SK-N-SH (cell line): ENCODE measurements at regions of chr15 and their contacts with region 1.

Region 1: GRCh38 chr15:101008158-101009139 is 89.3 kb downstream of the LRRK1 start:
- DNase-seq: peak; percentile 89
- H3K4me3 ChIP-seq: peak overlapping the region; percentile 43 to 59
- H3K27ac ChIP-seq: no peak overlapping the region; a peak in 1 of 4 replicates
- H3K4me1 ChIP-seq: peaks cover 0 to 4% of the 10 kb centered on the region in 2 experiments; a peak in 1 of 4 replicates
- H3K27me3 ChIP-seq: no peaks in the 10 kb centered on the region
- CTCF ChIP-seq: peak; percentile 92
- EP300 ChIP-seq: no peak
- RAD21 ChIP-seq: peak; percentile 60

Region 2: GRCh38 chr15:100602064-100602822 is 406.2 kb before region 1 on chr15 and contains the starts of genes ASB7 and LINS1:
- CTCF ChIA-PET with region 1: interaction called, 22 read pairs
- POLR2A ChIA-PET with region 1: no interaction called
- DNase-seq: peak; percentile 94
- H3K4me3 ChIP-seq: peak within 1 kb of the TSS; percentile 89 to 99
- H3K27ac ChIP-seq: peak within 1 kb of the TSS; percentile 63 to 87
- H3K4me1 ChIP-seq: peaks cover 5 to 18% of the 10 kb centered on the region in 2 experiments; a peak in 3 of 4 replicates
- H3K27me3 ChIP-seq: no peaks in the 10 kb centered on the region
- CTCF ChIP-seq: no peak
- EP300 ChIP-seq: peak in 1 of 2 experiments; percentile 4; a peak in 1 of 4 replicates
- RAD21 ChIP-seq: no peak
- polyA plus RNA-seq, gene ASB7: 6.1 and 7.7 TPM in 2 replicates
- polyA plus RNA-seq, gene LINS1: 5.0 and 6.9 TPM in 2 replicates

Region 3: GRCh38 chr15:100642213-100642949 is 366.1 kb before region 1 on chr15:
- CTCF ChIA-PET with region 1: interaction called, 102 read pairs
- POLR2A ChIA-PET with region 1: no interaction called
- DNase-seq: no peak
- H3K4me3 ChIP-seq: no peak overlapping the region
- H3K27ac ChIP-seq: no peak overlapping the region
- H3K4me1 ChIP-seq: peaks cover 0 to 2% of the 10 kb centered on the region in 2 experiments; a peak in 1 of 4 replicates
- H3K27me3 ChIP-seq: no peaks in the 10 kb centered on the region
- CTCF ChIP-seq: no peak
- EP300 ChIP-seq: no peak
- RAD21 ChIP-seq: no peak

Region 4: DNA sequence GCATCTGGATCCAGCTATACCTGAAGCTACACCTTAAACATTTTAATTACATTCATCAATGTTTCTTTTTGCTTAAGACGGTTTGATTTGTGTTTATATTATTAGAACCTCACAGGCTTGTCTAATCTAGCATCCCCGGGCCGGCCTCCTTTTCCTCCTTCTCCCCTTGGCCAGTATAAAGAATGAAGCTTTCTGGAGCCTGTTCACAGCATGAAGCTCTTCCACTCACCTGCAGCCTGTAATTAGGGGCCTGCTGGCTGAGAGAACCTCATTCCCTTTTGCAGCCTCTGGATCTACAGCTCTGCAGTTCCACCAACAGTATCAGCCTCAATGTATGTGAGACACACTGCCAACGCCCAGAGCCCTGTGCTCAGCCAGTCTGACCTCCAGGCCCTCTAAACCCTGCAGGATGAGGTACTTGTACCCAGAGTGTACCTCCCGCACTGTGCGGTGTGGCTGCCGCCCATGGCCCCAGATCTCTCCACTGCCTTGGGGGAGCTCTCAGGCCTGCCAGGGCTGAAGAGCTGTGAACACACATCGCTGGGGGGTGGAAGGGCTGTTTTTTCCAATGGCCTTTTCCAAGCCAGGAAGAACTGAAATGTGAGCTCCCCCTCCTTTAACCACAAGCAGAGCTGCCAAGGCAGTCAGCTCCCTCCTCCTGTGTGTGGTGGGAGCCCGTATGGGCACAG is 243.5 kb before region 1 on chr15:
- CTCF ChIA-PET with region 1: interaction called, 22 read pairs
- POLR2A ChIA-PET with region 1: interaction called, 3 read pairs
- DNase-seq: peak; percentile 45
- H3K4me3 ChIP-seq: no peak overlapping the region
- H3K27ac ChIP-seq: peak overlapping the region; percentile 44 to 94; a peak in 3 of 4 replicates
- H3K4me1 ChIP-seq: peaks cover 8 to 80% of the 10 kb centered on the region in 2 experiments; a peak in 3 of 4 replicates
- H3K27me3 ChIP-seq: no peaks in the 10 kb centered on the region
- CTCF ChIP-seq: no peak
- EP300 ChIP-seq: peak in 1 of 2 experiments; percentile 68; a peak in 1 of 4 replicates
- RAD21 ChIP-seq: no peak

Region 5: GRCh38 chr15:100918034-100918689 is 90.3 kb before region 1 on chr15:
- CTCF ChIA-PET with region 1: interaction called, 156 read pairs
- POLR2A ChIA-PET with region 1: interaction called, 5 read pairs
- DNase-seq: peak; percentile 93
- H3K4me3 ChIP-seq: peak overlapping the region; percentile 67 to 73
- H3K27ac ChIP-seq: peak overlapping the region in 1 of 2 experiments; percentile 16; a peak in 1 of 4 replicates
- H3K4me1 ChIP-seq: peaks cover 0 to 29% of the 10 kb centered on the region in 2 experiments; a peak in 1 of 4 replicates
- H3K27me3 ChIP-seq: no peaks in the 10 kb centered on the region
- CTCF ChIP-seq: peak; percentile 71
- EP300 ChIP-seq: no peak
- RAD21 ChIP-seq: peak; percentile 64

Region 6: GRCh38 chr15:101042320-101042719 is 33.9 kb after region 1 on chr15:
- CTCF ChIA-PET with region 1: interaction called, 11 read pairs
- POLR2A ChIA-PET with region 1: no interaction called
- DNase-seq: no peak
- H3K4me3 ChIP-seq: no peak overlapping the region
- H3K27ac ChIP-seq: no peak overlapping the region
- H3K4me1 ChIP-seq: no peaks in the 10 kb centered on the region
- H3K27me3 ChIP-seq: no peaks in the 10 kb centered on the region
- CTCF ChIP-seq: no peak
- EP300 ChIP-seq: no peak
- RAD21 ChIP-seq: no peak

Region 7: GRCh38 chr15:101267320-101268104 is 259.1 kb after region 1 on chr15:
- CTCF ChIA-PET with region 1: interaction called, 26 read pairs
- POLR2A ChIA-PET with region 1: no interaction called
- DNase-seq: no peak
- H3K4me3 ChIP-seq: no peak overlapping the region
- H3K27ac ChIP-seq: no peak overlapping the region; a peak in 2 of 4 replicates
- H3K4me1 ChIP-seq: peaks cover 0 to 11% of the 10 kb centered on the region in 2 experiments; a peak in 1 of 4 replicates
- H3K27me3 ChIP-seq: no peaks in the 10 kb centered on the region
- CTCF ChIP-seq: no peak
- EP300 ChIP-seq: no peak
- RAD21 ChIP-seq: no peak